IMR-90 (cell line): ENCODE measurements at regions of chr14 and their contacts with region 1.

Region 1: DNA sequence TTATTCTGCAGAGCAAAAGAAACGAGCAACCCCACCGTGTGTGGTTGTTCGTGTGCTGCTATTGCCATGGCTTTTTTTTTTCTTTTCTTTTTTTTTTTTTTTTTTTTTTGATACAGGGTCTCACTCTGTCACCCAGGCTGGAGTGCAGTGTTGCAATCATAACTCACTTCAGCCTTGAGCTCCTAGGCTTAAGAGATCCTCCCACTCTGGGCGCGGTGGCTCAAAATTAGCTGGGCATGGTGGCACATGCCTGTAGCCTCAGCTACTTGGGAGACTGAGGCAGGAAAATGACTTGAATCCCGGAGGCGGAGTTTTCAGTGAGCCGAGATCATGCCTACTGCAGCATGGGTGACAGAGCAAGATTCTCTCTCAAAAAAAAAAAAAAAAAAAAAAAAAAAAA is 144.2 kb downstream of the ESR2 start:
- DNase-seq: no peak
- ATAC-seq: no peak
- H3K4me3 ChIP-seq: no peak overlapping the region
- H3K27ac ChIP-seq: no peak overlapping the region
- H3K4me1 ChIP-seq: peaks cover 3% of the 10 kb centered on the region
- H3K27me3 ChIP-seq: no peaks in the 10 kb centered on the region
- CTCF ChIP-seq: no peak
- POLR2A ChIP-seq: no peak
- RAD21 ChIP-seq: no peak

Region 2: DNA sequence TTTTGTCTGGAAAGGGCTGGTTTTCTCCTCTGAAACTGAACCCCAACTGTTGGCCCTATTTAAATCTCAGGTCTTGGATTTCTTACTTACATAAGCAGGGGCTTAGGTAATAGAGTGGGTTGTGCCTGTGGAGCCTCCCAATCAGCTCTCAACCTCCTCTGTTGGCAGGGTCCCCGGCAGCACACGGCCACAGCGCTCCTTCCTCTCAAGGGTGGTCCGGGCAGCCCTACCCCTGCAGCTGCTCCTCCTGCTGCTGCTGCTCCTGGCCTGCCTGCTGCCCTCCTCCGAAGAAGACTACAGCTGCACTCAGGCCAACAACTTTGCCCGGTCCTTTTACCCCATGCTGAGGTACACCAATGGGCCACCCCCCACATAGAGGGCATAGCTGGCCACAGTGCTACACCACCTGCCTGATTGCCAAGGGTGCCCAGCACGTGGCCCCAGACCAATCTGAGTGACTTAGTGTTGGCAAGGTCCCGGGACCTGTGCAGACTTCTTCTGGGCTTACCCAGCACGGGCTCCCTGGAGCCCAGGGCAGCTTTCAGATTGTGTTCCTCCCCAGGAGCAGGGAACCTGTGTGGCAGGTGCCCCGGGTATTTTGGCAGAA is 75.3 kb after region 1 on chr14:
- CTCF ChIA-PET with region 1: no interaction called
- POLR2A ChIA-PET with region 1: interaction called, 10 read pairs
- dilution Hi-C with region 1: no loop called
- in situ Hi-C with region 1: no loop called
- intact Hi-C with region 1: no loop called
- DNase-seq: no peak
- ATAC-seq: no peak
- H3K4me3 ChIP-seq: no peak overlapping the region
- H3K27ac ChIP-seq: no peak overlapping the region
- H3K4me1 ChIP-seq: no peaks in the 10 kb centered on the region
- H3K27me3 ChIP-seq: no peaks in the 10 kb centered on the region
- CTCF ChIP-seq: no peak
- POLR2A ChIP-seq: no peak
- RAD21 ChIP-seq: no peak

Region 3: DNA sequence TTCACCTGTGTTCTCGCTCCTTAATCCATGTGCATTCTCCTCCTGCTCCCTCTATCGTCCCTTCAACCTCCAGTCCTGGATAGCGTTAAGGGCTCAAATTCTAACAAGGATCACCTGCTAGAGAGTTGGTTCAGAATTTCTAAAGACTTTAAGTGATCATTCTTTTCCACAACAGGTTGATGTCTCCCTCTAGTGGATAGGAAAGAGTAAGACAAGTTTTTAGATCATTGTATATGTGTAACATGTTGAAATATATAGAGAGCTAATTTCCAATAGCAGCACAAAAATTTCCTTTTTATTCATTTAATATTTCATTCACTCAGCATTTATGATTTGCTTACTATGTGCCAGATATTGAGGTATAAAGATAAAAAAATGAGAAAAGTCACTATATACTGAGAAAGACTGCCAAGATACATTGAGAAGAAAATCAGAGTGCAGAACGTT is 153.6 kb after region 1 on chr14:
- CTCF ChIA-PET with region 1: no interaction called
- POLR2A ChIA-PET with region 1: no interaction called
- dilution Hi-C with region 1: no loop called
- in situ Hi-C with region 1: no loop called
- intact Hi-C with region 1: no loop called
- DNase-seq: peak; percentile 68
- ATAC-seq: peak; percentile 77
- H3K4me3 ChIP-seq: no peak overlapping the region
- H3K27ac ChIP-seq: no peak overlapping the region
- H3K4me1 ChIP-seq: no peaks in the 10 kb centered on the region
- H3K27me3 ChIP-seq: peaks cover 8% of the 10 kb centered on the region
- CTCF ChIP-seq: peak; percentile 90
- POLR2A ChIP-seq: 0 out of 2 replicates have a peak, but pooled peaks have one; percentile 31
- RAD21 ChIP-seq: peak; percentile 85